KBM-7 (cell line): ENCODE measurements at regions of chr2 and their contacts with region 1.

Region 1: GRCh38 chr2:43239981-43240761 is 13.8 kb upstream of the ZFP36L2 start:
- DNase-seq: peak; percentile 28

Region 2: DNA sequence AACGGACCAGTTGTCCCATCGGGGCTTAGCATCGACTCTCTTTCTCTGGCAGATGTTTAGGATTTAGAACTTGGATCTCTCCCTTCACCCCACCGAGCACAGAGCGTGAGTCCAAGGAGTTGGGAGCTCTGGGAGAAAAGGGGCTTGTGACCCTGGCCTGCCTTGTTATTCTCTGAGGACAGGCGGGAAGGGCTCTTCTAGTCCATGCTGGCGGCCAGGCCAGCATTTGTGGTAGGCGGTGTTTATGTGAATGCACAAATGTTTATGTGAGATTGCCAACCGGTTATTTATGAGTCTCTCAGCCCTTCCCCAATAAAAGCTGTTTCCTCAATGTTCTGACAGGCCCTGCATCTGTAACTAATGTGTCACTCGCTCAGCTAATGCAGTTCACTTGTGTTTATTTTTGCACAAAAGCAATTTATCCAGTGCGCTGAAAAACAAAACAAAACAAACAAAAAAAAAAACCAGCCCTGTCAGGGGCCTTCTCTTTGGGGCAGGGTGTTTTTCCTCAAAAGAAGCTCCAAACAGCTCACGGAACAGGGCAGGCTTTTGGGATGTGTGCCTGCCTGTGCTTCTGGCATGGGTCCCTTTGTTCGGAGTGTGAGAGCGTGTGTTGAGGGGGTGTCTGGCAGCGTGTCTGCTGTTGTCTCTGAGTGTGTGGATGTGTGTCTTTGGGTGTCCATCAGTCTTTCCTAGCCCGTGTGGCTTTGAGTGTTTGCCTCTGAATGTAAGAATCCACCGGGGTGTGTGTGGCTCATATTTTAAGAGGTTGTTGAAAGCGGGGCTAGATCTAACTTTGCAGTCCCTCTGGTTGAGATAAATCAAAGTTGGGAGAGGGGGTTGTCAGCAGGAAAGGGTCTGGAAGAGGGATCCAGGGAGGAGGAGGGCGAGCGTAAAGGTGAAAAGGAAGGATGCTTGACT is 395.0 kb before region 1 on chr2:
- in situ Hi-C with region 1: loop called (anchors 10 kb)
- DNase-seq: no peak

Region 3: GRCh38 chr2:43010438-43011157 is 229.6 kb before region 1 on chr2:
- in situ Hi-C with region 1: no loop called
- DNase-seq: no peak